ENCODE measurements at regions of chr4 and their contacts with region 1.

Region 1: DNA sequence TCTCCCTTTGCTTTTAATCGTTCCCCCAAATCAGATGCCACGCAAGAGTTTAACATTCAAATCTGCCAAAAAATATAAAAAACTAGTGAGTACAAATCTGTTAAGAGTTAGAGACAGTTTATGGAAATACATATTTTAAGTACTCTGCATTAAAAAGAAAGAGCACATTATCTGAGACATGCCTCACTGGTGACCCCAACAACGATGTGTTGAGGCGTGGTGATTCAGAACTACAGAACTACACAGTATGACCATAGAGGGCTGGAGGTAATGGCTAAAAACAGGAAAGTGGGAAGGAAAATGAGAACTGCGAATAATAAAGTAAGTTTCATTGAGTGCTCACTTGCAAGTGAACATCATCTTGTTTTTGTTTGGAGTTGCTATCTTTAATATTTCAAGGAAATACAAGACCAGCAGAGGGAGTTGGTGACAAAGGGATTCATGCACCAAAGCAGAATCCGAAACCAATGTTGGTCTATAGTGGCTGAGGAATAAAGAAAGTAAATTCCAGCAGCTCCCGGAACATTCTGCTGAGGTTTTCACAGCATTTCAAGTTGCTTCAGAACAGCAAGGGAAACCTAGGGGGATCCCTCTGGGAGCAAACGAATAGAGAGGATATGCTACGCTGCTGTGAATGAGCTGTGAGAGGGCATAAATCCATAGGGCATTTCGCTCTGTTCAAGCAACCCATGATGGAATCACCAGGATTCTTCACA is 92.2 kb downstream of the DCHS2 start:
- DNase-seq: no peak
- H3K4me3 ChIP-seq: no peak overlapping the region
- H3K27ac ChIP-seq: no peak overlapping the region
- H3K4me1 ChIP-seq: no peaks in the 10 kb centered on the region
- H3K27me3 ChIP-seq: no peaks in the 10 kb centered on the region
- CTCF ChIP-seq: peak; percentile 35

Region 2: GRCh38 chr4:154506253-154506652 is 106.8 kb after region 1 on chr4:
- intact Hi-C with region 1: loop called (anchors 5 kb)
- DNase-seq: no peak
- H3K4me3 ChIP-seq: no peak overlapping the region
- H3K27ac ChIP-seq: no peak overlapping the region
- H3K4me1 ChIP-seq: no peaks in the 10 kb centered on the region
- H3K27me3 ChIP-seq: peaks cover 53% of the 10 kb centered on the region
- CTCF ChIP-seq: peak; percentile 52